Right ventricle myocardium inferior (tissue), 1 donor: ENCODE measurements at regions of chr5 and their contacts with region 1.

Region 1: DNA sequence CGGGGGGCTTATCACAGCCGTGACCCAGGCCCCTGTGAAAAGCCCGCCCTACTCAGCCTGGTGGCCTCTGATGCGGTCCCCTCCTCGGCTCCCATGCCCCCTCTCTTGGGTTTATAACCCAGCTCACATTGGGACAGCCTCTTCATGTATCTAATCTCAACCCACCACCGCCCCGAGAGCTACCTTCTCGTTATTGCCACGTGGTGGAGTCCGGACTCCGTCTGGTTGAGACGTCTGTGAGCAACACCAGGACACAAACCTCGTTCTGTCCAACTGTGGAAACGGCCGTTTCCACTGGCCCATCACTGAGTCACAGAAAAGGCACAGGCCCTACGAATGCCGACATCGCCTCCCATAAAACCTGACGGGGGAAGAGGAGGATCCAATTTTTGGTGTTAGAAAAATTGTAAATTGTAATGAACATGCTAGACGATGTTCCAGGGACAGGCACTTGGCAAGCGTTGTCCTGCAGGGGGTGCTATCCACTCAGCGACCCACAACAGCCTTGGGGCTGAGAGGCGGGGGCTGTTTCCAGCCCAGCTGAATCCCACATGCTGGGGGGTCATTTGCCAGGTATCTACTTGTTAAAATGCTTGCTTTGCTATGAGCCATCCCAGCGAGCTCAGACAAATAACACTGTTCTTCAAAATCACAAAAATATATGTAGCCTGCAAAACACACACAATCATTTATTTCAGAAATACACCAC is 37.3 kb upstream of the N4BP3 start:
- DNase-seq: peak; percentile 79
- ATAC-seq: peak; percentile 86

Region 2: GRCh38 chr5:178146020-178146820 is 70.2 kb after region 1 on chr5:
- intact Hi-C with region 1: loop called (anchors 1 kb)
- DNase-seq: no peak
- ATAC-seq: no peak

Region 3: GRCh38 chr5:178163772-178164735 is 88.1 kb after region 1 on chr5:
- intact Hi-C with region 1: loop called (anchors 1 kb)
- DNase-seq: peak; percentile 93
- ATAC-seq: peak; percentile 91